MCF 10A (cell line): ENCODE measurements at regions of chr2 and their contacts with region 1.

Region 1: DNA sequence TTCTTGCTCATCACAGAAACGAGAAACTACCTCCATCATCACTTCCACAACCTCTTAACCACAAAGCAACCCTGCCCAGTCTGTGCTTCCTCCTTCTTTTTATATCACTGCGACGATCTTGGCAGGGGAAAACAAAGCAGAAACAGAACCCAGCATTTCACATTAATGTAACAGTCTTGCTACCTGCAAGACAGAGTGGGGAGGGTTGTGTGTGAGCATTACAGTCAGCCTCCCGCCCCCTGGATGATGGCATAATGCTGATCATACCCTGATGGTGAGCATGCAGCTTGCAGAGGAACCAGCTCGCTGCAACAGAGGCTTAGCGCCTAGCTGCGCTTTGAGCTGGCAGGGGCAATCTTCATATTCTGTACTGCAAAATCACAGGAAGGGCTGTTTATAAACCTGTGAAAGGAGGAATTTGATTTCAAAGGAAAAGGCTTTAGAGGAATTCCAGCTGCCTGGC is 376.1 kb downstream of the IRS1 start:
- DNase-seq: no peak
- H3K4me3 Mint-ChIP-seq: no peak overlapping the region
- H3K27ac Mint-ChIP-seq: no peak overlapping the region
- H3K4me1 Mint-ChIP-seq: peaks cover 26% of the 10 kb centered on the region
- H3K27me3 Mint-ChIP-seq: no peaks in the 10 kb centered on the region
- CTCF ChIP-seq: no peak

Region 2: DNA sequence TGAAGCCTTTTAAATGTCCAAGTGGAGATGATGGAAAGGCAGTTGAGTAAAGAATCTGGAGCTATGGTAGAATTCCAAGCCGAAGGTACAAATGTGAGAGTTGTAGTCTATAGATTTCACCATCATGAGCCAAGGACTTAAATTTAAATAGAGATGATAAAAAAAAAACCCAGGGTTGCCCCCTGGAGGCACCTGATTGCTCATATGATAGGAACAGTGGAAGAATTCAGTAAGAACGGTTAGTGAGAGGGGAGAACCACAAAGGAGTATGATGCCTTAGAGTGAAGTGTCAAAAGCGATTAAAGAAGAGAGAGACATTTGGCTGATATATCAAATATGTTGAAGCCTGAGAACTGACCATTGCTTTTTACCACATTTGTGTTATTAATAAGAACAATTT is 1012.1 kb before region 1 on chr2:
- CTCF ChIA-PET with region 1: no interaction called
- POLR2A ChIA-PET with region 1: no interaction called
- intact Hi-C with region 1: no loop called
- DNase-seq: no peak
- H3K4me3 Mint-ChIP-seq: no peak overlapping the region
- H3K27ac Mint-ChIP-seq: no peak overlapping the region
- H3K4me1 Mint-ChIP-seq: no peaks in the 10 kb centered on the region
- H3K27me3 Mint-ChIP-seq: peaks cover 82% of the 10 kb centered on the region
- CTCF ChIP-seq: no peak

Region 3: DNA sequence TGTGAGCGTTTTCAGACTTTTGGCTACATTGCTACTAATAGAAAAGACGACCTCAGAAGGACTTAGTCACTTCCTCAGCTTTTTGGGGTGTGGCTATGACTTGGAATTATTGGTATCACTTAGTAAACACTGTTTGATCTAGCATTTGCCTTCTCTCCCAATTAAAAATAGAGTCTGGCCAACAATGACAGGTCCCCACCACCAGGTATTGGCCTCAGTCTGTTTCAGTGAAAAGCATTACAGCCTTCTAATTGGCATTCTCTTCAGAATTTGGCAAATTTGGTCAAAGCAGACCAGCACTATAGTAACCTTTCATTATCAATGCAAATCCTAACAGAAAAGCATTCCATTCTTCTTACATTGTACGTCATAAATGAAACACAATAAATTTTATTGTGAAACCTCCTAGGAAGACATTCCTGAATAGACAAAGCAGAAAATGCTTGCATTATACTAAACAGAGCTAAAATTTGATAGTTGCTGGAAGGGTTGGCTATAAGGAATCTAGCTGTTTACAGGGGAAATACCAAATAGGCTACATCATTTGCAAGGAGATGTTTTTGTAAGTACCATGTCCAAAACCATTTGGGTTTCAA is 237.8 kb before region 1 on chr2:
- CTCF ChIA-PET with region 1: no interaction called
- POLR2A ChIA-PET with region 1: no interaction called
- intact Hi-C with region 1: loop called (anchors 10 kb)
- DNase-seq: peak; percentile 66
- H3K4me3 Mint-ChIP-seq: peak overlapping the region; percentile 20
- H3K27ac Mint-ChIP-seq: peak overlapping the region; percentile 95
- H3K4me1 Mint-ChIP-seq: peaks cover 16% of the 10 kb centered on the region
- H3K27me3 Mint-ChIP-seq: no peaks in the 10 kb centered on the region
- CTCF ChIP-seq: no peak

Region 4: DNA sequence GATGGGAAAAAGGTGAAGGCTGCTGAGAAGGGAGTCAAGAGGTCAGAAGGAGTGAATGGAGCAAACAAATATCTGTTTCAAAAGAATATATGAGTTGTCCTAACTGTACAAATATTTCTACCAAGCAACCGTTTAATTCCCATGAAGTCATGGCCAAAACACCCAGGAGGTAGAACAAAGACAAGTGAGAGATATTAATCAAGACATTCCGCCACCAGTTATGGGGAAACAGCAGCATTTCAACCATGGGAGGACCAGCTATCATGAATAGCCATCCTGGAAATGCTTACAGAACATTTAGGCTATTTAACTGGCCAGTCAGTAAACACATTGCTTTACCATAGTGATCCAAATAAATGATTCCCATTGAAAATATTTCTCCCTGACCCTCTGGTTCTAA is 20.2 kb before region 1 on chr2:
- CTCF ChIA-PET with region 1: no interaction called
- POLR2A ChIA-PET with region 1: no interaction called
- intact Hi-C with region 1: no loop called
- DNase-seq: no peak
- H3K4me3 Mint-ChIP-seq: no peak overlapping the region
- H3K27ac Mint-ChIP-seq: peak overlapping the region; percentile 59
- H3K4me1 Mint-ChIP-seq: peaks cover 4% of the 10 kb centered on the region
- H3K27me3 Mint-ChIP-seq: no peaks in the 10 kb centered on the region
- CTCF ChIP-seq: no peak